ENCODE measurements at regions of chr5 and their contacts with region 1.

Region 1: DNA sequence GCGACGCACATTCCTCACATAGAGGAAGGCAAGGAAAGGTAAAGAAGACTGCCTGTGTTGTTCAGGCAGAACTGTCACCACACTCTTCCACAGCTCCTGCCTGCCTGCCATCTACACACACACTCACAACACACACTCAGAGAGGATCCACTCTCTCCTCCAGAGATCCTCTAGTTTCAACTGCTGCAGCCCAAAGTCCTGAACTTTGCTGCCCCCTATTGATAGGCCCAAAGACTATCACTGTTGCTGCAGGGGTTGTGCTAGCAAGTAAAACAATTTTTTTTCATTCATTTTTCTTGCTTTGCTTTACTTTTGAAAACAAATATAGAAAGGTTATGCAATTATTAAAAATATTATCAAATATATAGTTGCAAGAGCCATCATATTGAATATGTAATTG is 5.9 kb upstream of the CFAP90 start:
- DNase-seq: peak; percentile 34 to 67 (median 52)
- ATAC-seq: peak; percentile 94
- H3K4me3 ChIP-seq: no peak overlapping the region
- H3K27ac ChIP-seq: no peak overlapping the region
- H3K4me1 ChIP-seq: peaks cover 0 to 10% of the 10 kb centered on the region in 2 experiments; a peak in 4 of 5 replicates
- H3K27me3 ChIP-seq: no peaks in the 10 kb centered on the region
- CTCF ChIP-seq: peak; percentile 65 to 82 (median 78); a peak in 5 of 6 replicates
- EP300 ChIP-seq: no peak
- POLR2A ChIP-seq: no peak
- RAD21 ChIP-seq: peak; percentile 46 to 70

Region 2: GRCh38 chr5:7047511-7048261 is 809.2 kb before region 1 on chr5:
- CTCF ChIA-PET with region 1: no interaction called
- POLR2A ChIA-PET with region 1: no interaction called
- in situ Hi-C with region 1: no loop called
- intact Hi-C with region 1: no loop called
- DNase-seq: no peak
- ATAC-seq: no peak
- H3K4me3 ChIP-seq: no peak overlapping the region
- H3K27ac ChIP-seq: no peak overlapping the region
- H3K4me1 ChIP-seq: no peaks in the 10 kb centered on the region
- H3K27me3 ChIP-seq: no peaks in the 10 kb centered on the region
- CTCF ChIP-seq: no peak
- EP300 ChIP-seq: no peak
- POLR2A ChIP-seq: no peak
- RAD21 ChIP-seq: no peak

Region 3: GRCh38 chr5:7754992-7755596 is 101.8 kb before region 1 on chr5:
- CTCF ChIA-PET with region 1: no interaction called
- POLR2A ChIA-PET with region 1: no interaction called
- in situ Hi-C with region 1: no loop called
- intact Hi-C with region 1: loop called (anchors 5 kb)
- DNase-seq: peak; percentile 70 to 78 (median 77)
- ATAC-seq: peak; percentile 99
- H3K4me3 ChIP-seq: no peak overlapping the region
- H3K27ac ChIP-seq: no peak overlapping the region
- H3K4me1 ChIP-seq: no peaks in the 10 kb centered on the region
- H3K27me3 ChIP-seq: peaks cover 0 to 9% of the 10 kb centered on the region in 2 experiments; a peak in 1 of 5 replicates
- CTCF ChIP-seq: peak; percentile 89 to 96 (median 94)
- EP300 ChIP-seq: no peak
- POLR2A ChIP-seq: no peak
- RAD21 ChIP-seq: peak; percentile 72 to 87

Region 4: DNA sequence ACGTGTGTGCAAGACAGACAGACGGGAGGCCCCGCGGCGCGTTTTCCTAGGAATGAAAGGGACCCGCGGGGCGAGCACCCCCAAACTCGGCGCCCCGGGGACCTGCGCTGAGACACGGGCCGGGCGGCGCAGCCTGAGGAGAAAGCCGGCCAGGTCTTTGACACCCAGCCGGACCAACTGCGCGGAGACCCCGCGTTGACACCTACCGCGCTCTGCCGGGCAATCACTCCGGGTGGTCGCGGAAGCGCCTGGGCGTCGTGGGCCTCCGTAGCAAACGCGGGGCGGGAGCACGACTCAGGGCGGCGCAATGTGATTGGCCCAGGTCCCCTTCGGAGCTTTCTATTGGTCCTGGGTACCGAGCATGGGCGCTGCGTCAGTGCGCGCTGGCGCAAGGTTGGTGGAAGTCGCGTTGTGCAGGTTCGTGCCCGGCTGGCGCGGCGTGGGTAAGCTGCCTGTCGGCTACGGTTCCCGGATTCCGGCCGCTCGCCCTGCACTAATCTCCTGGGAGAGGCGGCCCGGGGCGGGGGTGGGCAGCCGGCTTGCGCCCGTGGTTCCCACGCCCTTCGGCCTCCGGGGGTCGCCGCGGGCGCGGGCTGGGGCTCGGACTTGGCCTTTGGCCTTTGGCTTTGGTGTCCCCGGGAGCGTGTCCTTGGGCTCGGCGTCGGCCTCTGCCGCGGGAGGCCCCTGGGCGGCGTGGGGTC is 12.1 kb after region 1 on chr5 and contains the starts of genes FASTKD3 and MTRR:
- CTCF ChIA-PET with region 1: no interaction called
- POLR2A ChIA-PET with region 1: interaction called, 11 read pairs
- in situ Hi-C with region 1: no loop called
- intact Hi-C with region 1: no loop called
- DNase-seq: peak; percentile 97 to 98 (median 98)
- ATAC-seq: peak; percentile 100
- H3K4me3 ChIP-seq: peak within 1 kb of the TSS; percentile 93
- H3K27ac ChIP-seq: peak within 1 kb of the TSS; percentile 77
- H3K4me1 ChIP-seq: peaks cover 6 to 20% of the 10 kb centered on the region in 2 experiments; a peak in 4 of 5 replicates
- H3K27me3 ChIP-seq: no peaks in the 10 kb centered on the region
- CTCF ChIP-seq: no peak
- EP300 ChIP-seq: no peak
- POLR2A ChIP-seq: peak; percentile 88
- RAD21 ChIP-seq: no peak
- polyA plus RNA-seq, gene FASTKD3: 127 to 149 TPM
- polyA plus RNA-seq, gene MTRR: 40.4 to 59.4 TPM